Tibial artery (tissue), 4 donors: ENCODE measurements at regions of chr10 and their contacts with region 1.

Region 1: GRCh38 chr10:113385021-113385999 is 167.5 kb upstream of the HABP2 start:
- DNase-seq: peak; percentile 93 to 95
- H3K4me3 ChIP-seq: peak overlapping the region; percentile 16 to 35
- H3K27ac ChIP-seq: peak overlapping the region; percentile 79 to 84
- H3K4me1 ChIP-seq: peaks cover 0 to 72% (median 39%) of the 10 kb centered on the region in 4 donors
- H3K27me3 ChIP-seq: no peaks in the 10 kb centered on the region
- CTCF ChIP-seq: peak; percentile 86 to 88

Region 2: DNA sequence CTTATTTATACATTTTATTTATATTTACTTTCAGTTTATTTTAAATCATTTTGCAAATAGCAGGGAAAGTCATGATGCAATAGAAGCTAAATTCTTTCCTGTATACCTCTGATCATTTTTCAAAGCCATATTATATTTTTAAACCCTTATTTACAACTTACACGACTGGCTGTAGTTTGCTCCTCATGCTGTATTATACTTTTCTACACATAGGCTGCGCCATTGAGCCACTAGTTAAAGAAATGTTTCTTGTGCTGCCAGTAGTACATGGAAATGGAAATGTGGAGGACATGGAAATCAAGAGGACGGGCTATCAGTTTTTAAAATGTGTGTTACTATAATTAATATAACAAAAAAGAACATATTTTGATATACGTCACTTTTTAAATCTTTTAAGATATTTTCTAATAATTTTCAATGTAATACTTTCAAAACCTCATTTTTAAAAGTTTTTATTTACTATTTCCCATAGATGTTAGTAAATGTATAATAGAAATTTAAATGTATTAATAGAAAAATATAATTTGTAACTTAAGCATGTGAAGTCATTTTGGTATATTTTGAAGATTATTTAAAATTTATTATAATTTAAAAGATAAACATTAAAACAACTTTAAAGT is 819.8 kb before region 1 on chr10:
- intact Hi-C with region 1: loop called (anchors 10 kb)
- DNase-seq: peak in 1 of 2 donors; percentile 23
- H3K4me3 ChIP-seq: no peak overlapping the region
- H3K27ac ChIP-seq: no peak overlapping the region
- H3K4me1 ChIP-seq: peaks cover 0 to 5% (median 0%) of the 10 kb centered on the region in 4 donors
- H3K27me3 ChIP-seq: no peaks in the 10 kb centered on the region
- CTCF ChIP-seq: peak; percentile 65 to 68

Region 3: DNA sequence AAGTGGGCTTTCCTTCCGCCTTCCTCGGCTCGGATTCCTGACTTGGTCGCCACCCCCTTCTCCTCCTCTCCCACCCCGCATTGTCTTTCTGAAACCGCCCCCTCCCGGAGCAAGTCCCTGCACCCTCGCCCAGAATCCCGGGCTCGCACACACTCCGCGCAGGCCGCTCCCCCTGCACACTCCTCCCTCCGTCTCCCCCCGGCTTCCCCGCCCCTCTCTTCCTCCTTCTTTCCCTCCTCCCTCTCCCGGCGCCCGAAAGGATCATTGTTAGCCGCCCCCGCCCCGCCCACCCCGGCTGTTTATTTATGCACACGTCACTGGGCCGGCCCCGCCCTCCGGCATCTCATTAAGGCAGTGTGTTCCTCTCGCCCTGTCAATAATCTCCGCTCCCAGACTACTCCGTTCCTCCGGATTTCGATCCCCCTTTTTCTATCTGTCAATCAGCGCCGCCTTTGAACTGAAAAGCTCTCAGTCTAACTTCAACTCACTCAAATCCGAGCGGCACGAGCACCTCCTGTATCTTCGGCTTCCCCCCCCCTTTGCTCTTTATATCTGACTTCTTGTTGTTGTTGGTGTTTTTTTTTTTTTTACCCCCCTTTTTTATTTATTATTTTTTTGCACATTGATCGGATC is 435.3 kb before region 1 on chr10 and contains the start of gene TCF7L2:
- intact Hi-C with region 1: loop called (anchors 10 kb)
- DNase-seq: peak; percentile 98 to 99
- H3K4me3 ChIP-seq: peak within 1 kb of the TSS; percentile 75 to 85
- H3K27ac ChIP-seq: peak within 1 kb of the TSS; percentile 95 to 96
- H3K4me1 ChIP-seq: peaks cover 0 to 56% (median 27%) of the 10 kb centered on the region in 4 donors
- H3K27me3 ChIP-seq: no peaks in the 10 kb centered on the region
- CTCF ChIP-seq: no peak

Region 4: GRCh38 chr10:113139699-113140098 is 245.6 kb before region 1 on chr10:
- intact Hi-C with region 1: loop called (anchors 5 kb)
- DNase-seq: no peak
- H3K4me3 ChIP-seq: no peak overlapping the region
- H3K27ac ChIP-seq: peak overlapping the region in 1 of 2 donors; percentile 44
- H3K4me1 ChIP-seq: peaks cover 0 to 45% (median 14%) of the 10 kb centered on the region in 4 donors
- H3K27me3 ChIP-seq: no peaks in the 10 kb centered on the region
- CTCF ChIP-seq: peak in 1 of 2 experiments; percentile 9

Region 5: GRCh38 chr10:113273181-113274163 is 111.8 kb before region 1 on chr10:
- intact Hi-C with region 1: no loop called
- DNase-seq: peak; percentile 42 to 74
- H3K4me3 ChIP-seq: peak overlapping the region in 1 of 2 donors; percentile 27
- H3K27ac ChIP-seq: peak overlapping the region; percentile 69 to 82
- H3K4me1 ChIP-seq: peaks cover 0 to 25% (median 18%) of the 10 kb centered on the region in 4 donors
- H3K27me3 ChIP-seq: no peaks in the 10 kb centered on the region
- CTCF ChIP-seq: no peak

Region 6: DNA sequence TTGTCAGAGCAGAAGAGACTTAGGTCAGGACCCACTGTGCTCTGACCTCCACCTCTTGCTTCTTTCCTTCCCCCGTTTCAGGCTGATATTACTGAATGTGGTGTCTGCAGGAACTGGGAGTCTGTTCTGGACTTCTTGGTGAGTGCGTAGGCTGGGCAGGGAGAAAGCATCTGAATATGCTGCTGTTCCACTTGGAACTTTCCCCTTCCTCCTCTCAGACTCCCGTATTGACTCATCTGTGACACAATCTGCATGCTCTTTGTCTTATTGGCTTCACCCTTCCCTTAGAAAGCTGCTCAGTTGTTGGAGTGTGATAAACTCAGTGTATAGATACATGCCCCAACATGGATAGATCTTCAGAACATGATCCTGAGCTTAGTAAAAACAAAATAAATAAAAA is 29.9 kb after region 1 on chr10:
- intact Hi-C with region 1: no loop called
- DNase-seq: no peak
- H3K4me3 ChIP-seq: no peak overlapping the region
- H3K27ac ChIP-seq: no peak overlapping the region
- H3K4me1 ChIP-seq: no peaks in the 10 kb centered on the region
- H3K27me3 ChIP-seq: no peaks in the 10 kb centered on the region
- CTCF ChIP-seq: no peak

Region 7: GRCh38 chr10:113521123-113521795 is 135.9 kb after region 1 on chr10:
- intact Hi-C with region 1: loop called (anchors 10 kb)
- DNase-seq: peak; percentile 78 to 82
- H3K4me3 ChIP-seq: no peak overlapping the region
- H3K27ac ChIP-seq: no peak overlapping the region
- H3K4me1 ChIP-seq: peaks cover 0 to 25% (median 15%) of the 10 kb centered on the region in 4 donors
- H3K27me3 ChIP-seq: no peaks in the 10 kb centered on the region
- CTCF ChIP-seq: peak; percentile 99 to 100